ENCODE measurements at regions of chr21 and their contacts with region 1.

Region 1: GRCh38 chr21:14523234-14523633 is 22.9 kb downstream of the SAMSN1 start:
- DNase-seq: peak in 1 of 4 experiments; percentile 28
- ATAC-seq: no peak
- H3K4me3 ChIP-seq: no peak overlapping the region
- H3K27ac ChIP-seq: no peak overlapping the region
- H3K4me1 ChIP-seq: peaks cover 4 to 16% of the 10 kb centered on the region in 2 experiments; a peak in 4 of 5 replicates
- H3K27me3 ChIP-seq: no peaks in the 10 kb centered on the region
- CTCF ChIP-seq: no peak
- EP300 ChIP-seq: no peak
- POLR2A ChIP-seq: no peak
- RAD21 ChIP-seq: no peak

Region 2: GRCh38 chr21:14239281-14239680 is 284.0 kb before region 1 on chr21:
- CTCF ChIA-PET with region 1: no interaction called
- POLR2A ChIA-PET with region 1: no interaction called
- in situ Hi-C with region 1: no loop called
- intact Hi-C with region 1: no loop called
- DNase-seq: no peak
- ATAC-seq: no peak
- H3K4me3 ChIP-seq: no peak overlapping the region
- H3K27ac ChIP-seq: no peak overlapping the region
- H3K4me1 ChIP-seq: no peaks in the 10 kb centered on the region; a peak in 1 of 5 replicates
- H3K27me3 ChIP-seq: no peaks in the 10 kb centered on the region
- CTCF ChIP-seq: no peak
- EP300 ChIP-seq: no peak
- POLR2A ChIP-seq: no peak
- RAD21 ChIP-seq: no peak

Region 3: GRCh38 chr21:14581902-14582457 is 58.7 kb after region 1 on chr21:
- CTCF ChIA-PET with region 1: no interaction called
- POLR2A ChIA-PET with region 1: no interaction called
- in situ Hi-C with region 1: no loop called
- intact Hi-C with region 1: loop called (anchors 5 kb)
- DNase-seq: peak in 2 of 4 experiments; percentile 36 to 80
- ATAC-seq: peak; percentile 66
- H3K4me3 ChIP-seq: peak overlapping the region; percentile 19
- H3K27ac ChIP-seq: peak overlapping the region; percentile 91
- H3K4me1 ChIP-seq: peaks cover 0 to 25% of the 10 kb centered on the region in 2 experiments; a peak in 3 of 5 replicates
- H3K27me3 ChIP-seq: no peaks in the 10 kb centered on the region
- CTCF ChIP-seq: no peak
- EP300 ChIP-seq: peak; percentile 95
- POLR2A ChIP-seq: peak; percentile 55
- RAD21 ChIP-seq: no peak; a peak in 1 of 4 replicates

Region 4: DNA sequence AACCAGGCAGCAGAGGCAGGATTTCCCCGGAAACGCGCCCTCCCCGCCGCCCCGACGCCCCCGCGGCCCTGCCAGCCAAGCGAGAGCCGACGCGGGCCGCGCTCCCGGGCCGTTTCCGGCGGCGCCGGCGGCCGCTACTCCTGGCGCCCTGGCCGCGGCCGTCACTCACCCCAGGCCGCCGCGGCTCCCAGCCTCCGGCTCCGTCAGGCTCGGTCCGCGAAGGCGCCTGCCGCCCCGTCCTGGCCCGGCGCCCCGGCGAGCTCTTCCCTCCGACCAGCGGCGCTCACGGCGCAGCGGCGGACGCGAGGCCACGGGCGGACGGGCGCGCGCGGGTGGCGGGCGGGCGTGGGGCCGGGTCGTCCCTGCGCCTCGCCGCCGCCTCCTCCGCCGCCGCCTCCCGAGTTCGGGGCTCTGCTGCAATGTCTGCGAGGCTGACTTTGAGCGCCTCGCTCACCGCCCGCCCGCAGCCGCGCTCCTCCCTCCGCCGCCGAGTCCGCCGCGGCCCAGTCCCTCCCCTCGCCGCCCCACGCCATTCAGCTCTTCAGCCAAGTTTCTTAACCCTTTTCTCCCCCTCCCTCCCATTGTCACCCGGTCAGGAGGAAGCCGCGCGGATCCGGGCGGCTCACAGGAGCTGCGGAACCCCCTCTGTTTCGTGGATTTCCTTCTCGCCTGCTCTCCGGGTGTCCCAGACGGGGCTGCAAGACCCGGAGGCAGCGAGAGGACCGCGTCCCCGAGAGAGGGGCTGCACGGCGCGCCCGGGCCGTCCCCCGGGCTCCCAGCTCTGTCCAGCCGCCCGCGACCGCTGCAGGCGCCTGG is 541.5 kb after region 1 on chr21 and contains the start of gene NRIP1:
- CTCF ChIA-PET with region 1: no interaction called
- POLR2A ChIA-PET with region 1: interaction called, 3 read pairs
- in situ Hi-C with region 1: no loop called
- intact Hi-C with region 1: loop called (anchors 5 kb)
- DNase-seq: peak; percentile 77 to 91 (median 83)
- ATAC-seq: peak; percentile 81
- H3K4me3 ChIP-seq: peak within 1 kb of the TSS; percentile 80
- H3K27ac ChIP-seq: peak within 1 kb of the TSS; percentile 85
- H3K4me1 ChIP-seq: peaks cover 12% of the 10 kb centered on the region in 2 experiments; a peak in 4 of 5 replicates
- H3K27me3 ChIP-seq: no peaks in the 10 kb centered on the region
- CTCF ChIP-seq: no peak
- EP300 ChIP-seq: no peak
- POLR2A ChIP-seq: peak; percentile 61
- RAD21 ChIP-seq: no peak
- polyA plus RNA-seq, gene NRIP1: 4.3 to 6.3 TPM

Measured in K562 (cell line).